Mammary epithelial cell (primary cell): ENCODE measurements at regions of chr19 and their contacts with region 1.

Region 1: DNA sequence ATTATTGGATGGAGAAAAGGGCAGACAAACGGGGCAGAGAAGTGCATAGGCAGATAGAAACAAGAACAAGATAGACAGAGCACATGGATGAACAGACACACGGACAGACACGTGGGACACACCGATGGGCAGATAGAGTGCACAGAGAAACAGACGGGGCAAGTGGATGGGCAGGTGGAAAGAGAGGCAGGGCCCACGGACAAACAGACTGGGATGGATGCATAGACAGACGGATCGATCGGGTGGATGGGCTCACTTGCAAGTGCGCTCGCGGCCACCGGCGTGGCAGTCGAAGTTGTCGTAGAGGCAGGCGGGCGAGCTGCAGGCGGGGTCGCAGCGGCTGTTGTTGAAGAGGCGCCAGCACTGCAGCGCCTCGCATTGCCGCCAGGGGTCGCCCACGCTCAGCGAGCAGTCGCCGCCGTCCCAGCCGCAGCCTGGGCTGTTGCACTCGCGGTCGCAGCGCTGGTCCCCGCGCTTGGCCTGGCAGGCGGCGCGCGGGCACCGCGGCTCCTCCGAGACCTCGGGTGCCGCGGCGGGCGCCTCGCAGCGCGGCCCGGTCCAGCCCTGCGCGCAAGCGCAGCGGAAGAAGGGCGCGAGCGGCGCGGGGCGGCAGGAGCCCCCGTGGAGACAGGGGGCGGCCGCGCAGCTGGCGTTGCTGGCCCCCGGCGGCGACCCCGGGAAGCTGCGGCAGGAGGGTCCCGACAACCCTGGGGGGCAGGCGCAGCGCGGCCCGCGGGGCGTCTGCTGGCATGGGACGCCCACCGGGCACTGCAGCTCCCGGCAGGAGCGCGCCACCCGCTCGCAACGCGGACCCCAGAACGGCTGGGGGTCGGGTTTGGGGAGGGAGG is 23.3 kb downstream of the NOTCH3 start:
- DNase-seq: peak; percentile 48
- H3K4me3 ChIP-seq: peak overlapping the region in 1 of 3 experiments; percentile 35
- H3K27ac ChIP-seq: no peak overlapping the region
- H3K4me1 ChIP-seq: peaks cover 15% of the 10 kb centered on the region
- H3K27me3 ChIP-seq: no peaks in the 10 kb centered on the region
- CTCF ChIP-seq: peak; percentile 74 to 79

Region 2: DNA sequence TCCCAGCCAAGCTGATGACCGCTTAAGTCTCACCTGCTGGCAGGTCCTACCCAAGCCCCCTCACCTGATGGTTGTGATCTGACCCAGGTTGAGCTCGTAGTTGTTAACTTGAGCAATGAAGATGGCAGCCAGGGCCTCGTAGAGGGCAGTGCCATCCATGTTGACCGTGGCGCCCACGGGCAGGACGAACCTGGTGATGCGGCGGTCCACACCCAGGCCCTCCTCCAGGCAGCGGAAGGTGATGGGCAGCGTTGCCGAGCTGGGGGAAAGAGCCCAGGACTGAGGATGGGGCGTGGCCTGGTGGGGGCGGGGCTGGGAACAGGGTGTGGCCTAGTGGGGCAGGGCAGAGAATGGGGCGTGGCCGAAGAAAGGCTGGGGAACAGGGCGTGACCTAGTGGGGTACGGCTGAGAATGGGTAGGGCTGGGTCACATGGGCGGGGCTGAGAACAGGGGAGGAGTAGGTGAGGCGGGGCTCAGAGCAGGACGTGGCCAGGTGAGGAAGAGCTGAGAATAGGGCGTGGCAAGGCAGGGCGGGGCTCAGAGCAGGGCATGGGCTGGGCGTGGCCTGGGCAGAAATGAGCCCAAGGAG is 223.3 kb before region 1 on chr19:
- CTCF ChIA-PET with region 1: no interaction called
- dilution Hi-C with region 1: no loop called
- in situ Hi-C with region 1: no loop called
- intact Hi-C with region 1: no loop called
- DNase-seq: peak; percentile 15
- H3K4me3 ChIP-seq: no peak overlapping the region
- H3K27ac ChIP-seq: no peak overlapping the region
- H3K4me1 ChIP-seq: peaks cover 4% of the 10 kb centered on the region
- H3K27me3 ChIP-seq: no peaks in the 10 kb centered on the region
- CTCF ChIP-seq: no peak

Region 3: GRCh38 chr19:15107061-15108010 is 70.2 kb before region 1 on chr19 and contains the start of gene SYDE1:
- CTCF ChIA-PET with region 1: no interaction called
- dilution Hi-C with region 1: loop called (anchors 5 kb)
- in situ Hi-C with region 1: no loop called
- intact Hi-C with region 1: no loop called
- DNase-seq: peak; percentile 35
- H3K4me3 ChIP-seq: peak within 1 kb of the TSS; percentile 58 to 66 (median 59)
- H3K27ac ChIP-seq: peak within 1 kb of the TSS; percentile 10
- H3K4me1 ChIP-seq: peaks cover 7% of the 10 kb centered on the region
- H3K27me3 ChIP-seq: no peaks in the 10 kb centered on the region
- CTCF ChIP-seq: no peak
- total RNA-seq, gene SYDE1: 10.7 to 11.0 TPM

Region 4: DNA sequence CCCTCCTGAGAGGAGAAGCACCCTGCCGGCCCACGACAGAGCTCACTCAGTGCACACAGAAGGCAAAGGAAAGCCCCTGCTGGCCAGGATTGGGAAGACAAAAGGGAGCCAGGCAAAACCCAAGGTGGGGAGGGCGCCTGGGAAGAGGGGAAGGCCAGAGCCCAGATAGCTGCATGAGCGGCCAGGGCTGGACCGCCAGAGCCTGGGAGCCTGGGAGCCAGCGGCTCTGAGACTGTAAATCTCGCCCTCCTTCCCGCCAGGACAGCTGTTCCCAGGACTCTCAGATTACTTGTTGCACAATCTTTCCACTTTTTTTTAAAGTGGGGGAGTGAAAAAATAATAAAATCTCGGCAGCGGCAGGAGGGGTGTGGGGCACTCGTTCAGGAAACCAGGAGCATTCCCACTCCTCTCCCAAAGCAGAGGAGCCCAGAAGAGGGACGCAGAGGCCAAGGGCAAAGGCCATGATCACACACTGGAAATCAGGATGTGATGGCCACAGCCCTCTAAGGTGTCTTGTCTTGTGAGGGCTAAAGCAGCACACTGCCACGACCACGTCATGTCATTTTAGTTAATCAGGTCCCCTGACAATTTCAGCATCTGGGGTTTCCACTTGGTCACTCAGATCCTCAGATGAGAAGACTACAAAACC is 74.4 kb after region 1 on chr19:
- CTCF ChIA-PET with region 1: interaction called, 5 read pairs
- dilution Hi-C with region 1: loop called (anchors 5 kb)
- in situ Hi-C with region 1: no loop called
- intact Hi-C with region 1: loop called (anchors 1 kb)
- DNase-seq: peak; percentile 61
- H3K4me3 ChIP-seq: no peak overlapping the region
- H3K27ac ChIP-seq: no peak overlapping the region
- H3K4me1 ChIP-seq: peaks cover 42% of the 10 kb centered on the region
- H3K27me3 ChIP-seq: no peaks in the 10 kb centered on the region
- CTCF ChIP-seq: peak; percentile 39 to 40

Region 5: GRCh38 chr19:15379083-15379995 is 201.8 kb after region 1 on chr19 and contains the start of gene AKAP8:
- CTCF ChIA-PET with region 1: no interaction called
- dilution Hi-C with region 1: no loop called
- in situ Hi-C with region 1: no loop called
- intact Hi-C with region 1: loop called (anchors 2 kb)
- DNase-seq: peak; percentile 99
- H3K4me3 ChIP-seq: peak within 1 kb of the TSS; percentile 88 to 100 (median 91)
- H3K27ac ChIP-seq: peak within 1 kb of the TSS; percentile 86
- H3K4me1 ChIP-seq: peaks cover 24% of the 10 kb centered on the region
- H3K27me3 ChIP-seq: no peaks in the 10 kb centered on the region
- CTCF ChIP-seq: no peak
- total RNA-seq, gene AKAP8: 12.8 to 33.2 TPM

Region 6: DNA sequence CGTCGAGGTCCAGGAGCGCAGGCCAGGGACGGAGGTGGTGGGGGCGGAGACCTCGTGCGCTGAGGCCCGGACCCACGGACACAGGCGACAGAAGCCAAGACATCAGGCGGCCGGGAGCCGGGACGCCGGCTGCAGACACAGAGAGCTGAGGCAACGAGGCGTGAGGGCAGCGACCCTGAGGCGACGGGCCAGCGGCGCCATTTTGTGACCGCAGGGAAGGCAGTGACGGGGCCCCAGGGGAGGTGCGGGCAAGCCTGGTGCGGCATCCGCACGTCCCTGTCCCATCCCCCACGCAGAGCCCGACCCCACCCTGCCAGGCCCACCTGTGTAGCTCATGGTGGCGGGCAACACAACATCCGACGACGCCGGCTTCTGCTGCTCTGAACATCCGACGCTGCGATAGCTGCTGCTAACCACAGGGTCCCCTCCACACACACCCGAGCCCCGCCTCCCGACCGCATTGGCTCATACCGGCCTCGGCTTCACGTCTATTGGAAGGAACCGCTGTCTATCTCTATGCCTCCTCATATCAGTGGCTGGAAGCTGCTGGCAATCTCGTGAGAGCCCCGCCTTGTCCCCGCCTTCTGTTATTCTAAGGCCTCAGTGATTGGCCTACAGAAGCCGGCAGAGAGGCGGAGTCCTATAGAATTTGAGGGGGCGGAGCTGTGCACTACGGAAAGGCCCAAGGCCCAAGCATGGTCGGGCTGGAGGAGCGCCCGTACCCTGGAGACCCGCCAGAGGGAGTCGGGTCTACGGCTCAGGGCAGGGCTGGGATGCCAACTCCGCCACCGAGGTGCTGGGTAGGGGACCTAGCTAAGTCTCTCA is 241.3 kb after region 1 on chr19 and contains the start of gene AKAP8L:
- CTCF ChIA-PET with region 1: no interaction called
- dilution Hi-C with region 1: no loop called
- in situ Hi-C with region 1: no loop called
- intact Hi-C with region 1: loop called (anchors 10 kb)
- DNase-seq: peak; percentile 99
- H3K4me3 ChIP-seq: peak within 1 kb of the TSS; percentile 80 to 99 (median 92)
- H3K27ac ChIP-seq: peak within 1 kb of the TSS; percentile 60
- H3K4me1 ChIP-seq: peaks cover 23% of the 10 kb centered on the region
- H3K27me3 ChIP-seq: no peaks in the 10 kb centered on the region
- CTCF ChIP-seq: peak; percentile 51 to 77
- total RNA-seq, gene AKAP8L: 55.0 to 75.9 TPM